ENCODE measurements at regions of chr1 and their contacts with region 1.

Region 1: DNA sequence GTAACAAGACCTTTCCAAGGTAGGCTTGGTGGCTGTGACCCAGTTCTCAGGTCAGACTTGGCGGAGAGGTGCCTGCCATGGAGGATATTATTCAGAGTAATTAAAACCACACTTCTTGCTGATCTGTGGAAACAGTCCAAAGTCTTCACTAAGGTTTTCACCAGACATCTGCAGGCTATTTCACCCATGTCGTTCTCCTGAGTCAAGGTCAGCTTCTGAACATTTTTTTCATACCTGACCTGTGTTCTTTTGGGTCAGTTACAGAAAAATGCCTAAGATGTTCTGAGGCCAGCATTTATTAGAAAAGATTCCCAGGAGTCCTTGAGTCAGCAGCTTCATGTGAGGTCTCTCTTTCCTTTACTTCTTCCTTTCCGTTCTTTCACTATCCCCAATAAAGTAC is 54.9 kb downstream of the RGL1 start:
- DNase-seq: no peak
- ATAC-seq: no peak
- H3K4me3 ChIP-seq: no peak overlapping the region
- H3K27ac ChIP-seq: no peak overlapping the region
- H3K4me1 ChIP-seq: no peaks in the 10 kb centered on the region
- H3K27me3 ChIP-seq: no peaks in the 10 kb centered on the region
- CTCF ChIP-seq: no peak
- EP300 ChIP-seq: no peak
- POLR2A ChIP-seq: no peak
- RAD21 ChIP-seq: no peak

Region 2: GRCh38 chr1:183792300-183792699 is 67.5 kb before region 1 on chr1:
- CTCF ChIA-PET with region 1: no interaction called
- POLR2A ChIA-PET with region 1: no interaction called
- in situ Hi-C with region 1: no loop called
- intact Hi-C with region 1: loop called (anchors 10 kb)
- DNase-seq: no peak
- ATAC-seq: no peak
- H3K4me3 ChIP-seq: no peak overlapping the region
- H3K27ac ChIP-seq: no peak overlapping the region
- H3K4me1 ChIP-seq: no peaks in the 10 kb centered on the region
- H3K27me3 ChIP-seq: no peaks in the 10 kb centered on the region
- CTCF ChIP-seq: no peak
- EP300 ChIP-seq: no peak
- POLR2A ChIP-seq: no peak
- RAD21 ChIP-seq: no peak

Measured in K562 (cell line).